Caco-2 (cell line): ENCODE measurements at regions of chr1 and their contacts with region 1.

Region 1: DNA sequence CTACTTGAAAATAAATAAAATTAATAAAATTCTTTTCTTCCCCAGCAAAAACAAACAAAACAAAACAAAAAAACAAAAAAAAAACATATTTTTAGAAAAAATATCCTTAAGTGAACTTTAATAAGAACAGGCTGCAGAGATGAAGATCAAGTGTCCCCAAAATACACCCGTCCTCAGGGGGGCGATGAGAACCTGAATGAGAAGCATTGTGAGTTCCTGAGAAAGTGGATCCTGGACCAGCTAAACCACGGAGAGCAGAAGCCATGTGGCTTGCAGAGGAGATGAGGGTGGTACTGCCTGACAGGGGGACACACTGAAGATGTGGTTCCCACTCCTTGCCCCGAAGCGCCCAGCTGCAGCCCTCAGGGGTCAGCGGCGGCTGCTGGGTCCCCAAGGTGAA is 89.3 kb downstream of the ITPKB start:
- DNase-seq: peak in 1 of 2 experiments; percentile 46
- H3K4me3 ChIP-seq: no peak overlapping the region
- H3K4me3 Mint-ChIP-seq: no peak overlapping the region
- H3K27ac Mint-ChIP-seq: no peak overlapping the region
- H3K4me1 ChIP-seq: peaks cover 15% of the 10 kb centered on the region
- H3K4me1 Mint-ChIP-seq: peaks cover 15% of the 10 kb centered on the region
- H3K27me3 ChIP-seq: peaks cover 1% of the 10 kb centered on the region; the same call in 1 of the 2 replicates
- H3K27me3 Mint-ChIP-seq: no peaks in the 10 kb centered on the region
- CTCF ChIP-seq: peak; percentile 24 to 35

Region 2: DNA sequence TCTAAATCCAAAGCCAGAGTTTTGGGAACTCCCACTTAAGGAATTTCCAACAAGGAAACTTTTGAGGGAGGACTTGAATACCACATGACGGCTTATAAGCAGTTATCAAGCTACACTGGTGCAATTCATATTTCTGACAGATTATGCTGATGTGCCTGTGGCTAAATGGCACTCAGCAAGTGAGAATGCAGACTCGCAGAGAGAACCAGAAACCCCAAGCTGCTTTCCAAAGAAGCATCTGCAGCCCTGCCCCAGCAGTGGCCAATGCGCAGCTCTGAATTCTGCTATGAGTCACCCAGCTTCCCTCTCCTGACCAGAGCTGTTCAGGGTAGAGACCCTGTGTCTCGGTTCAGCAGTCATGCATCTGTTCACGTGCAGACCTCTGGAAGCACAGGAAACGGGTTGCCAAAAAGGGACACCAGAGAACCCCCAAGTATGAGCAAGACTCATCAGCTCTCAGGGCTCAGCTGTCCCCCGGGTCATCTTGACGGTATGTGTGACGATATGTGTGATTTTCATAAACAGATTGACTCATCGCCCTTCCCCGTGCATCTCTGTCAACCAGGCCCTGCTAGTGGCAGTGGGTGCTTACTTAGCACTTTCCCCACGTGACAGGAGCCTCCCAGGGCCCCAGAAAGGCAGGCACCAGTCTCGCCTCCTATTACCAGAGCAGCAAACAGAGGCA is 13.0 kb after region 1 on chr1:
- CTCF ChIA-PET with region 1: no interaction called
- POLR2A ChIA-PET with region 1: no interaction called
- intact Hi-C with region 1: no loop called
- DNase-seq: no peak
- H3K4me3 ChIP-seq: no peak overlapping the region
- H3K4me3 Mint-ChIP-seq: no peak overlapping the region
- H3K27ac Mint-ChIP-seq: no peak overlapping the region
- H3K4me1 ChIP-seq: no peaks in the 10 kb centered on the region
- H3K4me1 Mint-ChIP-seq: no peaks in the 10 kb centered on the region
- H3K27me3 ChIP-seq: no peaks in the 10 kb centered on the region
- H3K27me3 Mint-ChIP-seq: no peaks in the 10 kb centered on the region
- CTCF ChIP-seq: no peak

Region 3: DNA sequence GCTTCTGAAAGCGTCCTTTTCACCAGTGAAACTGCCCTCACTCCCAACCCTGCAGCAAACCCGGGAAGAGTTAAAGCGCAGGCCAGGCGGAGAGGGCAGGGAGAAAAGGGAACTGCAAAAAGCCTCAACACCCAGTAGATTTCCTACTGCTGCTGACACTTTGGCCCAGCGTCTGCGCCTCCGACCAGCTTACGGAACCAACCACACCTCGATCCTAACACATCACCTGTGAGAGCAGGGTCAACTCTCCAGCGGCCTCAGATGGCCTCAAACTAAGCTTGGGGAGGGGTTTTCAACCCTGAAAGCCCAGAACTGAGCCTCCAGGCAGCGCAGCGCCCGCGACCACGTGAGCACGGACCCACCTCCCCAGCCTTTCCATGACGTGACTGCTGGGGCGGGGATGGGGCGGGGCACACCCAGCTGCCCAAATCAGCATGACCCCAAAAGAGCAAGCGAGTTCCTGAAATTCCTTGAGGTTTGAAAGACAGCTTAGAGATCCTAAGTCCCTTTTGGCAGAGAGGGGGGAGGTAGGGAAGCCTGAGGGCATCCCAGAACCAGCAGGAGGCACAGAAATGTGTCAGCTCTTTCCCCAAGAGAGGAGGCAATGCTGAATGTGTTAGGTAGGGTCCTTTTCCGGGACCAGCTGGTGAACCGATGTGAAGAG is 30.2 kb after region 1 on chr1:
- CTCF ChIA-PET with region 1: interaction called, 6 read pairs
- POLR2A ChIA-PET with region 1: interaction called, 9 read pairs
- intact Hi-C with region 1: loop called (anchors 1 kb)
- DNase-seq: peak; percentile 87 to 92
- H3K4me3 ChIP-seq: peak overlapping the region; percentile 21
- H3K4me3 Mint-ChIP-seq: peak overlapping the region; percentile 75
- H3K27ac Mint-ChIP-seq: peak overlapping the region; percentile 98
- H3K4me1 ChIP-seq: peaks cover 21% of the 10 kb centered on the region
- H3K4me1 Mint-ChIP-seq: peaks cover 20% of the 10 kb centered on the region
- H3K27me3 ChIP-seq: no peaks in the 10 kb centered on the region
- H3K27me3 Mint-ChIP-seq: no peaks in the 10 kb centered on the region
- CTCF ChIP-seq: no peak

Region 4: DNA sequence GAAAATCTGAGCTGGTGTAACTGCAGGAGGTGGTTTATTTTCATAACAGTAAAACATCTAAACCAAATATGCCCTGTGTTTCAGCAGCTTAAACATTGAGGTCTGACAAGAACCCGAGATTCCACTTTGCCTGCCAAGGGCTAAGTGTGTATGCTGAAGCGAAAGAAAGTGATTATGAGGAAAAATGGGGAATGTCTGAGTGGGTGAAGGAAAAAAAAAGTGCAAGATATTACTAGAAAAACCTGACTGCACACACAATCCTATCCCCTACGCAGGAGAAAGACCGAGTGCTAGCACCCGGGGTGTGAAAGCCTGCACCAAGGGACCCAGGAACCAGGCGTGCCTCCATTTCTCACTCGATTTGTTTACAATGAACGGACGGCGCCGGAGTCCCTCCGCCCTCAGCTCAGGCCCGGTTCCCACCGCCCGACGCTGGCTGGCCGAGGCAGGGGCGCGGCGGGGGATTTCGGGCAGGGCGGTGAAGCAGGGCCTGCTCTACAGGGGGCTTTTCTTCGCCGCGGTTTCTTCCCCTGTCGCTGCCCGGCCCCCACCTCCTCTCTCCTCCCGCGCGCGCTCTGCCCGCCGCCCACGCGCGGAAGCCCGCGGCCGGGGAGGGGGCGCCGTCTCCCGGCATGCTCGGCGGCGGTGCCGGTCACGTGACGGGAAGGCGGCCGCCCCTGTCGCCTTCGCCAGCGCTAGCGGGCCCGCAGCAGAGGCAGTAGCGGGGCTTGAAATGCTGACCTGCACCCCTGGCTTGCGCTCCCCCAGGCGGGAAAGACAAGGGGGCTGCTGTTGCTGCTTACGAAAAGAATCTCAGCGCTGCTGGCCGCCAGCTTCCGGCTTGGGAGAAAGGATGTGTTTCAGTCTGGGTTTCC is 53.4 kb after region 1 on chr1:
- CTCF ChIA-PET with region 1: no interaction called
- POLR2A ChIA-PET with region 1: no interaction called
- intact Hi-C with region 1: loop called (anchors 5 kb)
- DNase-seq: peak; percentile 49 to 82
- H3K4me3 ChIP-seq: peak overlapping the region; percentile 69
- H3K4me3 Mint-ChIP-seq: peak overlapping the region; percentile 83
- H3K27ac Mint-ChIP-seq: peak overlapping the region; percentile 72
- H3K4me1 ChIP-seq: peaks cover 5% of the 10 kb centered on the region; the same call in 1 of the 2 replicates
- H3K4me1 Mint-ChIP-seq: no peaks in the 10 kb centered on the region
- H3K27me3 ChIP-seq: no peaks in the 10 kb centered on the region
- H3K27me3 Mint-ChIP-seq: no peaks in the 10 kb centered on the region
- CTCF ChIP-seq: no peak

Region 5: DNA sequence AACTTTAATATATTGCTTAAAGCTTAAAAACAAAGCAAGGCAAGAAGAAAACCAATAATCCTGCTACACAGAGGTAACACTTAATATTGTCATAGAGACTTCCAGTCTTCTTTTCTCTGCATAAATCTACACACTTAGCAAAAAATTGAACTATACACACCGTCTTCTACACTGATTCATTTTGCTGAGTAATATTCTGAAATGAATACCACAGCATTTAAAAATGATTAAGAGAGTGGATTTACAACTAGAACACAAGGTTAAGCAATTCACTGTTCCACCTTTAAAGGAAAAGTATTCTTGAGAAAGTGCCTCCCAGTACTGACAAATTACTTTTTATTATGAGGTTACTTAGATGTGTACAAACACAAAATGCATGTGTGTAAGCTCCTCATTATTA is 111.5 kb after region 1 on chr1:
- CTCF ChIA-PET with region 1: no interaction called
- POLR2A ChIA-PET with region 1: no interaction called
- intact Hi-C with region 1: no loop called
- DNase-seq: no peak
- H3K4me3 ChIP-seq: no peak overlapping the region
- H3K4me3 Mint-ChIP-seq: no peak overlapping the region
- H3K27ac Mint-ChIP-seq: no peak overlapping the region
- H3K4me1 ChIP-seq: no peaks in the 10 kb centered on the region
- H3K4me1 Mint-ChIP-seq: no peaks in the 10 kb centered on the region
- H3K27me3 ChIP-seq: no peaks in the 10 kb centered on the region; the same call in 1 of the 2 replicates
- H3K27me3 Mint-ChIP-seq: peaks cover 15% of the 10 kb centered on the region
- CTCF ChIP-seq: no peak

Region 6: DNA sequence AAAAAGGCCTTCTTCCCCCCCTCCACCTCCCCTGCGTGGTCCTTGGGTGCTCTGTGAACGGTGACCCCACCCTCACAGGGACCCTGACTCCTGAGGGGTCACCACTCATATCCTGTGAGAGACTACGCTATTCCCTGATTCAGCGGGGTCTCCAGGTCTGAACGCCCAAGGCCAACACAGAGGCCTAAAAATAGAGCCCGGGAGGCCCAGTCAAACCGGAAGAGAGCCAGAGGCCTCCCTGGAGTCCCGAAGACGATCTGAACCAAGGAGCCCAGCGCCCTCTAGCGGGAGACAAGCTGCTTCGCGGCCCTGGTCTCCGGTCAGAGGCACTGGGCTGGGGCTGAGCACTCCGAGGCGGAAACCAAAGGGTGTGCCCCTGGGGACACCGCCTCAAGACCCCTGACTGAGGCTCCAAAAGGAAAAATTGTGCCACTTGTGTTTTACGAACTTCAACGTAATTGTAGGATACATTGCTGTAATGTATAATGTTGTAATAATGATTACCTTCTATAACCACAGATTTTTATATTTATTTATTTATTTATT is 178.3 kb after region 1 on chr1:
- CTCF ChIA-PET with region 1: no interaction called
- POLR2A ChIA-PET with region 1: no interaction called
- intact Hi-C with region 1: loop called (anchors 1 kb)
- DNase-seq: peak; percentile 90
- H3K4me3 ChIP-seq: no peak overlapping the region
- H3K4me3 Mint-ChIP-seq: no peak overlapping the region
- H3K27ac Mint-ChIP-seq: no peak overlapping the region
- H3K4me1 ChIP-seq: no peaks in the 10 kb centered on the region
- H3K4me1 Mint-ChIP-seq: no peaks in the 10 kb centered on the region
- H3K27me3 ChIP-seq: no peaks in the 10 kb centered on the region
- H3K27me3 Mint-ChIP-seq: no peaks in the 10 kb centered on the region
- CTCF ChIP-seq: peak; percentile 78 to 81

Region 7: DNA sequence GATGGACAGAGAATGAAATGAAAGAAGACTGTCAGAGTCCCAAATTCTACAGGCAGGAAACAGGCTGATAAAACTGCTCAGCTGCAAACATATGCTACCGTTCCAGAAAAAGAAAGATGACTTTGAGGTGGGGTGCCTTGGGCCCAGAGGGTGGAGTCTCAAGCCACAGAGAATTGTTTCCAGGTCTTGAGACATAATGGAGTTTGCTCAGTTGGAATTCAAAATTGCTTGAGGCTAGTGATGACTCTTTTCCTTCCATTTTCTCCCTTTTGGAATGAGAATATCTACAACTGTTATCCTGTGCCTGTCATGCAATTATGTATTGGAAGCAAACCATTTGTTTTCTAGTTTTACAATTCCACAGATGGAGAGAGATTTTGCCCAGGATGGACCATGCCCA is 197.0 kb after region 1 on chr1:
- CTCF ChIA-PET with region 1: no interaction called
- POLR2A ChIA-PET with region 1: no interaction called
- intact Hi-C with region 1: no loop called
- DNase-seq: no peak
- H3K4me3 ChIP-seq: no peak overlapping the region
- H3K4me3 Mint-ChIP-seq: no peak overlapping the region
- H3K27ac Mint-ChIP-seq: no peak overlapping the region
- H3K4me1 ChIP-seq: no peaks in the 10 kb centered on the region
- H3K4me1 Mint-ChIP-seq: no peaks in the 10 kb centered on the region
- H3K27me3 ChIP-seq: no peaks in the 10 kb centered on the region
- H3K27me3 Mint-ChIP-seq: no peaks in the 10 kb centered on the region
- CTCF ChIP-seq: no peak

Region 8: DNA sequence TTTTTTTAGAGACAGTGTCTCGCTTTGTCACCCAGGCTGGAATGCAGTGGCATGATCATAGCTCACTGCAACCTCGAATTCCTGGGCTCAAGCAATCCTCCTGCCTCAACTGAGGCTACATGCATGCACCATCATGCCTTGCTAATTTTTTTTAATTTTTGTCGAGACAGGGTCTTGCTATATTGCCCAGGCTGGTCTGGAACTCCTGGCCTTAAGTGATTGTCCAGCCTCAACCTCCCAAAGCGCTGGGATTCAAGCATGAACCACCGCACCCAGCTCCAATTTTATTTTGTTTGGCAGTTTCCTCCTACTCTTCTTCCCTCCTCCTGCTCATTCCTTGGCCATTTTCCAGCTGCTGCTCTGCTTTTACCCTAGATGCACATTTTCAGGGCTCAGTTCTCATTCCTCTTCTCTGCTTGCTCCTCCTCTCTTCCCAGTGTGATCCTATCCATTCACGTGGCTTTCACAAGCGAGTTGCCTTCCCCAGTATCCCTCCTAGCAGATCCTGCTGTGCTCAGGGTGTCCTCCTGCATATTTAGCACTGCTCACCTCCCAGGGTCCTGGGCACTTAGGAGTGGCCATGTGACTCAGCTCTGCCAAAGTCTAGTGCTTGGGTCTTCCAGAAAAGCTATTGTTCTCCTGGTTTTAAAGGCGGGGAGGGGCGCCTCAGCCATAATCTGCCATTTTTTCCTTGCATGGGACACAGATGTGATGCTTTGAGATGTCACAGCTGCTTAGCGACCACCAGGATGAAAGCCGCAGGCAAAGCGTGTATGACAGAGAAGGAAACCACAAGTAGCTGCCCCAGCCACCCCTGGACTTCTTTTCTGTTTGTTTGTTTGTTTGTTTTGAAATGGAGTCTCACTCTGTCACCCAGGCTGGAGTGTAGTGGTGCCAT is 254.3 kb after region 1 on chr1:
- CTCF ChIA-PET with region 1: no interaction called
- POLR2A ChIA-PET with region 1: no interaction called
- intact Hi-C with region 1: no loop called
- DNase-seq: no peak
- H3K4me3 ChIP-seq: no peak overlapping the region
- H3K4me3 Mint-ChIP-seq: no peak overlapping the region
- H3K27ac Mint-ChIP-seq: no peak overlapping the region
- H3K4me1 ChIP-seq: no peaks in the 10 kb centered on the region
- H3K4me1 Mint-ChIP-seq: no peaks in the 10 kb centered on the region
- H3K27me3 ChIP-seq: no peaks in the 10 kb centered on the region
- H3K27me3 Mint-ChIP-seq: no peaks in the 10 kb centered on the region
- CTCF ChIP-seq: no peak